ENCODE measurements at regions of chr17 and their contacts with region 1.

Region 1: DNA sequence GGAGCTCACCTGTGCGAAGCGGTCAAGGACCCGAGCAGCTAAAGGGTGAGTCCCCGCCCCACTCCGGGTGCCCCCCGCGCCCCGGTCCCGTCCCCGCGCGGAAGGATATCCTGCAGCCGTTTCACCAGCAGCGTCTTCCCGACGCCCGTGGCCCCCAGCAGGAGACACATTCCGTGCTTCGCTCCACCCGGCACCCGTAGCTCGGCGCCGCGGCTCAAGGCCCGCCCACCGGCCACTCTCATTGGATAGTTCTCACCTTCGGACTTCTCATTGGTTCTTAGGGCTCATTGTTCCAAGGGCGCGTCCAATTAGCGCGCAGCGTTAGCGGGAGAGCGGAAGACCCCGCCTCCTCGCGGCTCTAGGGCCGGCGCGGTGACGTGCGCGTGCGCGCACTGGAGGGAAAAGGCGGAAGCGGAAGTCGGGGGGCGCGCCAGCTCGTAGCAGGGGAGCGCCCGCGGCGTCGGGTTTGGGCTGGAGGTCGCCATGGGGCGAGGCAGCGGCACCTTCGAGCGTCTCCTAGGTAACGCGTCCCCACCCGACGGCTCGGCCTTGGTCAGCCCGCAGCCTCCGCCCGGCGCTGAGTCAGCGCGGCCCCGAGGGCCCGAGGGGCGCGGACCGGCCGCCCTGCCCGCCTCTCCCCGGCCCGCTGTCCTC is at the starts of genes ARL16 and HGS:
- DNase-seq: peak; percentile 91 to 98 (median 97)
- ATAC-seq: peak; percentile 98
- H3K4me3 ChIP-seq: peak within 1 kb of the TSS; percentile 76
- H3K4me3 Mint-ChIP-seq: peak within 1 kb of the TSS; percentile 88 to 99 (median 96)
- H3K27ac ChIP-seq: peak within 1 kb of the TSS; percentile 84
- H3K27ac Mint-ChIP-seq: peak within 1 kb of the TSS; percentile 83 to 97 (median 95)
- H3K4me1 ChIP-seq: peaks cover 22 to 24% of the 10 kb centered on the region in 2 donors
- H3K4me1 Mint-ChIP-seq: peaks cover 22 to 49% (median 40%) of the 10 kb centered on the region in 7 donors
- H3K27me3 ChIP-seq: no peaks in the 10 kb centered on the region
- H3K27me3 Mint-ChIP-seq: peaks cover 0 to 3% (median 0%) of the 10 kb centered on the region in 5 donors
- total RNA-seq, gene ARL16: 12.0 to 30.6 (median 30.1) TPM
- total RNA-seq, gene HGS: 108 to 174 (median 153) TPM

Region 2: DNA sequence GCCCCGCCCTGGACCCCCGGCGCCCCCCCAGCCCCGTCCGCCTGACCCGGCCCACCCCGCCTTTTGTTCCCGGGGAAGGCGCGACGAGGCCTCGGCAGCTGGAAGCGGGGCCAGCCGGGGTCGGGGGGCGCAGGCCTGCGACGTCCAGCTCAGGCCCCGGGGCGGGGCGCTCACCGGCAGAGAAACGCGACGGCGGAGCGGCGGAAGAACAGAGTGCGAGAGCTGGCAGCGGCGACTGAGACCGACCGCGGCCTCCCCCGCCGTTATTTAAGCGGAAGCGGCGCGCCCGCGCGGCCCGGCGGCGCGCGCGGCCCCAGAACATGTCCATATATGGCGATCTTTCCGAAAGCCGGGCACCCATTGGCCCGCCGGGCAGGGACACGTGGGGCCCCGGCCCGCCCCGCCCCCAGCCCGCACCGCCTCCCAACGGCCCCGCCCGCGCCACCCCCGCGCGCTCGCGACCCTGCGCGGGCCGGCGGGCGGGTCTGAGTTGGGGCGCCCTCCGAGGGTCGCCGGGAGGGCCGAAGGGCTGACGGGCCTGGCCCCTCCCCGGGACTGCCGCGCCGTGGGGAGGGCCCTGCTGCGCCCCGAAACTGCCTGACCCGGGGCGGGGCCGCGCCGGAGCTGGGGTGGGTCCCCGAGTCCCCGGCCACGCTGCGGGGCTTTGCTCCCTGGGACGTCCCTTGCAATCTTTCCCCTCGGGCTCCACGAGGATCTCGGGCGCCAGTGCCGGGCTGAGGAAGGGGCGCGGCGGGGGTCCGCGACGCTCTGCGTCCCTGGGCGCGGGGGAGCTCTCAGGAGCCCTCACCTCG is 170.9 kb before region 1 on chr17 and contains the start of gene ACTG1:
- CTCF ChIA-PET with region 1: no interaction called
- POLR2A ChIA-PET with region 1: interaction called, 3 read pairs
- intact Hi-C with region 1: loop called (anchors 5 kb)
- DNase-seq: peak; percentile 87 to 93 (median 92)
- ATAC-seq: peak; percentile 87
- H3K4me3 ChIP-seq: peak within 1 kb of the TSS; percentile 77
- H3K4me3 Mint-ChIP-seq: peak within 1 kb of the TSS; percentile 91 to 100 (median 98)
- H3K27ac ChIP-seq: peak within 1 kb of the TSS; percentile 79
- H3K27ac Mint-ChIP-seq: peak within 1 kb of the TSS; percentile 92 to 99 (median 95)
- H3K4me1 ChIP-seq: peaks cover 12 to 31% of the 10 kb centered on the region in 2 donors
- H3K4me1 Mint-ChIP-seq: peaks cover 23 to 53% (median 47%) of the 10 kb centered on the region in 7 donors
- H3K27me3 ChIP-seq: no peaks in the 10 kb centered on the region
- H3K27me3 Mint-ChIP-seq: peaks cover 0 to 7% (median 0%) of the 10 kb centered on the region in 5 donors
- total RNA-seq, gene ACTG1: 971 to 4,639 (median 1,185) TPM

Region 3: DNA sequence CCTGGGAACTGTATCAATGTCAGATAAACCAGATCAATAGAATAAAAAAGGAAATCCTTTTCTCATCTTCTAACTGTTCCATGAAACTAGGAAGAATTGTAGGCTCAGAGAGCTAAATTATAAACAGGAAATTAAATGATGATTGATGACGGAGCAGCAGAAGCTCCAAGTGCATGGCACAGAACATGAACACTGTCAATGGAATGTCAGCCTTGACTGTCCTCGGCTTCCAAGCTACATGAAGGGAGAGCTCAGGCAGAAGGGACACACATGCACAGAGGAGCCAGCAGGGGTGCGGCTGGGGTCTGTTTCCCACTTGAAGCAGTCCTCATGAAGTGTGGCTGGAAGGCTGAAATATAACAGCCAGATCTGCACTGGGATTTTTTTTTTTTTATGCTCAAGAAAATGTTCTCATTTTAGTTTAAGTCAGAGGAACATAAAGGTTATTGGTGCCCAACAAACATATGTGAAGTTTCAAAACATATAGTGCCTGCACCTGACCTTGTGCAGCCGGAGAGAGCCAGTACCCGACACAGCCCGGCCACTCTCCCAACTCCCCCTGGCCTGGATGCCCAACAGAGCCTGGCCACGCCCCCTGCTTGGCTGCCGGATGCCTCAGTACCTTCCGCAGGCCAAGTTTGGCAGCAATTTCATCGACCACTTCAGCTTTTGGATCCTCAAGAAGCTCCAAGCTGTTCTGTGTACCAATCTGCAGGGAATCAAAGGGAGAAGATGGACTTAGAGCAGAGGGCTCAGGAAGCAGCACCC is 83.8 kb before region 1 on chr17:
- CTCF ChIA-PET with region 1: no interaction called
- POLR2A ChIA-PET with region 1: no interaction called
- intact Hi-C with region 1: no loop called
- DNase-seq: no peak
- ATAC-seq: no peak
- H3K4me3 ChIP-seq: no peak overlapping the region
- H3K4me3 Mint-ChIP-seq: no peak overlapping the region
- H3K27ac ChIP-seq: no peak overlapping the region
- H3K27ac Mint-ChIP-seq: peak overlapping the region in 1 of 9 donors; percentile 36
- H3K4me1 ChIP-seq: peaks cover 0 to 6% of the 10 kb centered on the region in 2 donors
- H3K4me1 Mint-ChIP-seq: peaks cover 2 to 14% (median 9%) of the 10 kb centered on the region in 7 donors
- H3K27me3 ChIP-seq: no peaks in the 10 kb centered on the region
- H3K27me3 Mint-ChIP-seq: no peaks in the 10 kb centered on the region

Region 4: GRCh38 chr17:81636505-81637288 is 47.0 kb before region 1 on chr17 and contains the starts of genes NPLOC4 and TSPAN10:
- CTCF ChIA-PET with region 1: no interaction called
- POLR2A ChIA-PET with region 1: interaction called, 3 read pairs
- intact Hi-C with region 1: loop called (anchors 1 kb)
- DNase-seq: peak; percentile 62 to 94 (median 80)
- ATAC-seq: peak; percentile 95
- H3K4me3 ChIP-seq: peak within 1 kb of the TSS; percentile 86
- H3K4me3 Mint-ChIP-seq: peak within 1 kb of the TSS; percentile 91 to 98 (median 95)
- H3K27ac ChIP-seq: peak within 1 kb of the TSS; percentile 87
- H3K27ac Mint-ChIP-seq: peak within 1 kb of the TSS; percentile 25 to 94 (median 89)
- H3K4me1 ChIP-seq: peaks cover 10 to 12% of the 10 kb centered on the region in 2 donors
- H3K4me1 Mint-ChIP-seq: peaks cover 13 to 37% (median 26%) of the 10 kb centered on the region in 7 donors
- H3K27me3 ChIP-seq: no peaks in the 10 kb centered on the region
- H3K27me3 Mint-ChIP-seq: no peaks in the 10 kb centered on the region
- total RNA-seq, gene NPLOC4: 77.7 to 125 (median 93.6) TPM
- total RNA-seq, gene TSPAN10: 0.32 to 1.9 (median 0.51) TPM

Region 5: DNA sequence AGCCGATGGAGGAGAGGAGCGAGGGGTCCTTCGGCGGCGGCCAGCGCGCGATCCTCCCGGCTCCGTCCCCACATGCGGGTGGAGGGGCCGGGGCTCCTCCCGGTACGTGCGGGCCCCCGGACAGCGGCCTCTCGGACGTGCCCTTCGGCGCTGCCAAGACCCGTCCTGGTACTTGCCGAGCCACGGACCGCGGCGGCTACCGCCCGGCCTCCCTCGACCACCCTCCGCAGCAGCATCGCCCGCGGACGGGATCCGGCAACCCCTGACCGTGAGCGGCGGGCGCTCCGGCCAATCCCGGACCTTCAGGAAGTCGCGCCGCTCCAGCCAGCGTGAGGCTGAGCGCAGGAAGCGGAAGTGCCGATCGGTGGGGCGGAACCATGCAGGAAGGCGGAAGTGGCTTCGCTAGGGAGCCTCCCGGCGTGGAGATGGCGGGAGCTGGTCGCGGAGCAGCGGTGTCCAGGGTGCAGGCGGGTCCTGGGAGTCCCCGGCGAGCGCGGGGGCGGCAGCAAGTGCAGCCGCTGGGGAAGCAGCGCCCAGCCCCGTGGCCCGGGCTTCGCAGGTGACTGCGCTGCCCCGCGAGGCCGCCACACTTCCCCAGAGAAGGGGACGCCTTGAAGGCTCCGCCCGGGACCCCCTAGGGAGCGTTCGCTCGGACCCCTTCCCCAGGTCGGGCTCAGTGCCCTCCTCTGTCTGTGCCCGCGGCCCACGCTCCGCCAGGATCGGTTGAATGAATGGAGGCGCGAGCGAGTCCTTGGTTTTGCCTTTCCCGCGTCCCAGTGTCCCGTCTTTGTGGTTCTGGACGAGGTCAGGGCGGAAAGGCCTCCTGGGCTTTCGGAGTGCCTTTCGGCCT is 17.1 kb before region 1 on chr17 and contains the starts of genes CCDC137 and OXLD1:
- CTCF ChIA-PET with region 1: interaction called, 3 read pairs
- POLR2A ChIA-PET with region 1: interaction called, 26 read pairs
- intact Hi-C with region 1: loop called (anchors 1 to 2 kb)
- DNase-seq: peak; percentile 82 to 93 (median 89)
- ATAC-seq: peak; percentile 94
- H3K4me3 ChIP-seq: peak within 1 kb of the TSS; percentile 86
- H3K4me3 Mint-ChIP-seq: peak within 1 kb of the TSS; percentile 88 to 99 (median 94)
- H3K27ac ChIP-seq: peak within 1 kb of the TSS; percentile 93
- H3K27ac Mint-ChIP-seq: peak within 1 kb of the TSS; percentile 84 to 97 (median 92)
- H3K4me1 ChIP-seq: peaks cover 35 to 50% of the 10 kb centered on the region in 2 donors
- H3K4me1 Mint-ChIP-seq: peaks cover 17 to 62% (median 43%) of the 10 kb centered on the region in 7 donors
- H3K27me3 ChIP-seq: no peaks in the 10 kb centered on the region
- H3K27me3 Mint-ChIP-seq: no peaks in the 10 kb centered on the region
- total RNA-seq, gene CCDC137: 16.3 to 33.5 (median 27.1) TPM
- total RNA-seq, gene OXLD1: 35.9 to 61.9 (median 47.5) TPM

Region 6: GRCh38 chr17:81702971-81703746 is 19.4 kb after region 1 on chr17 and contains the start of gene MRPL12:
- CTCF ChIA-PET with region 1: no interaction called
- POLR2A ChIA-PET with region 1: interaction called, 49 read pairs
- intact Hi-C with region 1: loop called (anchors 1 kb)
- DNase-seq: peak; percentile 75 to 87 (median 84)
- ATAC-seq: peak; percentile 96
- H3K4me3 ChIP-seq: peak within 1 kb of the TSS; percentile 91
- H3K4me3 Mint-ChIP-seq: peak within 1 kb of the TSS; percentile 83 to 94 (median 90)
- H3K27ac ChIP-seq: peak within 1 kb of the TSS; percentile 95
- H3K27ac Mint-ChIP-seq: peak within 1 kb of the TSS; percentile 84 to 96 (median 92)
- H3K4me1 ChIP-seq: peaks cover 23 to 24% of the 10 kb centered on the region in 2 donors
- H3K4me1 Mint-ChIP-seq: peaks cover 21 to 38% (median 26%) of the 10 kb centered on the region in 7 donors
- H3K27me3 ChIP-seq: no peaks in the 10 kb centered on the region
- H3K27me3 Mint-ChIP-seq: no peaks in the 10 kb centered on the region
- total RNA-seq, gene MRPL12: 21.3 to 83.8 (median 26.6) TPM

Region 7: GRCh38 chr17:81711814-81712467 is 28.2 kb after region 1 on chr17 and contains the start of gene SLC25A10:
- CTCF ChIA-PET with region 1: no interaction called
- POLR2A ChIA-PET with region 1: interaction called, 5 read pairs
- intact Hi-C with region 1: loop called (anchors 1 kb)
- DNase-seq: peak; percentile 65 to 89 (median 78)
- ATAC-seq: peak; percentile 94
- H3K4me3 ChIP-seq: peak within 1 kb of the TSS; percentile 24
- H3K4me3 Mint-ChIP-seq: peak within 1 kb of the TSS; percentile 80 to 90 (median 86)
- H3K27ac ChIP-seq: peak within 1 kb of the TSS; percentile 55
- H3K27ac Mint-ChIP-seq: peak within 1 kb of the TSS; percentile 32 to 86 (median 75)
- H3K4me1 ChIP-seq: peaks cover 13% of the 10 kb centered on the region in 2 donors
- H3K4me1 Mint-ChIP-seq: peaks cover 9 to 23% (median 18%) of the 10 kb centered on the region in 7 donors
- H3K27me3 ChIP-seq: no peaks in the 10 kb centered on the region
- H3K27me3 Mint-ChIP-seq: no peaks in the 10 kb centered on the region
- total RNA-seq, gene SLC25A10: 4.0 to 27.4 (median 6.2) TPM

Region 8: GRCh38 chr17:81833160-81833920 is 149.6 kb after region 1 on chr17 and contains the start of gene MCRIP1:
- CTCF ChIA-PET with region 1: no interaction called
- POLR2A ChIA-PET with region 1: interaction called, 3 read pairs
- intact Hi-C with region 1: loop called in 1 of 2 experiments (anchors 1 kb)
- DNase-seq: peak; percentile 87 to 100 (median 91)
- ATAC-seq: peak; percentile 84
- H3K4me3 ChIP-seq: peak within 1 kb of the TSS; percentile 82
- H3K4me3 Mint-ChIP-seq: peak within 1 kb of the TSS; percentile 75 to 96 (median 92)
- H3K27ac ChIP-seq: peak within 1 kb of the TSS; percentile 91
- H3K27ac Mint-ChIP-seq: peak within 1 kb of the TSS; percentile 81 to 97 (median 91)
- H3K4me1 ChIP-seq: peaks cover 13 to 16% of the 10 kb centered on the region in 2 donors
- H3K4me1 Mint-ChIP-seq: peaks cover 11 to 27% (median 19%) of the 10 kb centered on the region in 7 donors
- H3K27me3 ChIP-seq: no peaks in the 10 kb centered on the region
- H3K27me3 Mint-ChIP-seq: no peaks in the 10 kb centered on the region
- total RNA-seq, gene MCRIP1: 41.1 to 65.3 (median 53.1) TPM

Measured in naive thymus-derived CD4-positive, alpha-beta T cell (primary cell).